Cardiac septum (tissue), 1 donor: ENCODE measurements at regions of chr1 and their contacts with region 1.

Region 1: GRCh38 chr1:206544562-206545257 is 37.4 kb downstream of the RASSF5 start:
- DNase-seq: peak; percentile 85

Region 2: DNA sequence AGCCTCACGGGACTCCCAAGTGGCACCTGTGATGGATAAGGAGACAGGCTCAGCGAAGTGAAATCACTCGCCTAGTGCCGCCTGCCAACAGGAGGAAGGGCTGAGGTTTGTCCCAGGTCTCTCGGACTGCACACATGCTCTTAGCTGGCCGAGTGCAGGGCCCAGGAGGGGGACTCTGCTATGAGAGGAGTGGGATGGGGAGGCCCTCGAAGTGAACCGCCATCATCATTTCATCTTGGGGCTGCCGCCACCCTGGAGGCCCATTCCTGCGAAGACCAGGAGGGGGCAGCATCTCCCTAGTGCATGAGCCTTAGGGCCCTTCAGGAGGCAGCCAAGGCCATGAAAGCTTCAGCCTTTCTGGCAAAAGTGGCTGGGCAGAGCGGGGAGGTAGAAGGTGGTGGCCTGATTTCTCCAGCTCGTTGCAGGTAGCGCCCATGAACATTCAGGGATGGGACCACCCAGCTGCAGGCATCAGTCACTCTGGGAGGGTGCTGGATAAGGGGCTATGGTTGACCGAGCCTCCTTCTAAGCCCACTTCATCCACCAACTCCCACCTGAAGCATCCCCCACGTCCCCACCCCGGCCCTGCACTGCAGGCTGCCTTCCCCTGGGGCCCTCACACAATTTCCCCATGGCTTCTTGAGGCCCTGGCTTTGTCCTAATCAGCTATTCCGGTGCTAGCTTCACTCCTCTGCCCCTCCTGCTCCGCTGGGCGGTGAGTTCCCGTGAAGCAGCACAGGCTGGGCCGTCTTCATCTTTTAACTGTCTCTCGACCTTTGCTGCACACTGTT is 54.5 kb before region 1 on chr1:
- intact Hi-C with region 1: loop called (anchors 2 kb)
- DNase-seq: peak; percentile 88